ENCODE measurements at regions of chr9 and their contacts with region 1.

Region 1: GRCh38 chr9:33731142-33731541 is 64.2 kb upstream of the PRSS3 start:
- DNase-seq: no peak
- ATAC-seq: peak in 2 of 8 donors; percentile 19 to 53
- H3K4me3 ChIP-seq: no peak overlapping the region
- H3K27ac ChIP-seq: no peak overlapping the region
- H3K4me1 ChIP-seq: no peaks in the 10 kb centered on the region
- H3K27me3 ChIP-seq: peaks cover 0 to 8% (median 0%) of the 10 kb centered on the region in 7 donors
- CTCF ChIP-seq: no peak

Region 2: DNA sequence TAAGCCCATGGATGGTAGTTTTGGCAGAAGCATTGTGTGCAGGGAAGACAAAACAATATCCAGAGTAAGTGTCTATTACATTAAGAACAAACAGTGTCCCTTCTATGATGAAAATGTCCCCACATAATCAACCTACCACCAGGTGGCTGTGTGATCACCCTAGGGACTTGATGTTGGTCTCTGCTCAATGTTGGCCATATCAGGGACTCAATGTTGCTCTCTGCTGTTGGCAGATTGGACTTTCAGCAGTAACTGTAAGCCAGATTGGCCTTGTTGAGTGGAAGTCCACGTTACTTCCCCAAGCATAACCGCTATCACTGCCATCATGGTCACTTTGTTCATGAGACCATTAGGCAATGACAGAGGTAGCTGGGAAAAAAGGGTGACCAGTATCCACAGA is 11.4 kb after region 1 on chr9:
- intact Hi-C with region 1: no loop called
- DNase-seq: no peak
- ATAC-seq: no peak
- H3K4me3 ChIP-seq: no peak overlapping the region
- H3K27ac ChIP-seq: no peak overlapping the region
- H3K4me1 ChIP-seq: no peaks in the 10 kb centered on the region
- H3K27me3 ChIP-seq: peaks cover 0 to 8% (median 0%) of the 10 kb centered on the region in 7 donors
- CTCF ChIP-seq: no peak

Region 3: GRCh38 chr9:33778700-33779351 is 47.7 kb after region 1 on chr9:
- intact Hi-C with region 1: loop called in 1 of 10 experiments (anchors 5 kb)
- DNase-seq: peak in 1 of 2 donors; percentile 27
- ATAC-seq: peak in 7 of 8 donors; percentile 42 to 75 (median 55)
- H3K4me3 ChIP-seq: no peak overlapping the region
- H3K27ac ChIP-seq: no peak overlapping the region
- H3K4me1 ChIP-seq: peaks cover 0 to 3% (median 0%) of the 10 kb centered on the region in 9 donors
- H3K27me3 ChIP-seq: peaks cover 0 to 11% (median 0%) of the 10 kb centered on the region in 7 donors
- CTCF ChIP-seq: peak in 8 of 9 donors; percentile 70 to 84 (median 72)

Region 4: GRCh38 chr9:33893861-33894260 is 162.7 kb after region 1 on chr9:
- intact Hi-C with region 1: no loop called
- DNase-seq: no peak
- ATAC-seq: no peak
- H3K4me3 ChIP-seq: no peak overlapping the region
- H3K27ac ChIP-seq: no peak overlapping the region
- H3K4me1 ChIP-seq: peaks cover 0 to 7% (median 0%) of the 10 kb centered on the region in 9 donors
- H3K27me3 ChIP-seq: no peaks in the 10 kb centered on the region
- CTCF ChIP-seq: no peak